PC-9 (cell line): ENCODE measurements at regions of chr1 and their contacts with region 1.

Region 1: GRCh38 chr1:178633056-178633455 is 92.0 kb upstream of the RALGPS2 start:
- DNase-seq: peak; percentile 25 to 72
- H3K4me3 ChIP-seq: no peak overlapping the region
- H3K27ac ChIP-seq: 0 out of 2 replicates have a peak overlapping the region, but pooled peaks have one; percentile 18
- H3K4me1 ChIP-seq: 0 out of 2 replicates have a peak, but pooled peaks cover 13% of the 10 kb centered on the region
- H3K27me3 ChIP-seq: no peaks in the 10 kb centered on the region
- CTCF ChIP-seq: no peak

Region 2: DNA sequence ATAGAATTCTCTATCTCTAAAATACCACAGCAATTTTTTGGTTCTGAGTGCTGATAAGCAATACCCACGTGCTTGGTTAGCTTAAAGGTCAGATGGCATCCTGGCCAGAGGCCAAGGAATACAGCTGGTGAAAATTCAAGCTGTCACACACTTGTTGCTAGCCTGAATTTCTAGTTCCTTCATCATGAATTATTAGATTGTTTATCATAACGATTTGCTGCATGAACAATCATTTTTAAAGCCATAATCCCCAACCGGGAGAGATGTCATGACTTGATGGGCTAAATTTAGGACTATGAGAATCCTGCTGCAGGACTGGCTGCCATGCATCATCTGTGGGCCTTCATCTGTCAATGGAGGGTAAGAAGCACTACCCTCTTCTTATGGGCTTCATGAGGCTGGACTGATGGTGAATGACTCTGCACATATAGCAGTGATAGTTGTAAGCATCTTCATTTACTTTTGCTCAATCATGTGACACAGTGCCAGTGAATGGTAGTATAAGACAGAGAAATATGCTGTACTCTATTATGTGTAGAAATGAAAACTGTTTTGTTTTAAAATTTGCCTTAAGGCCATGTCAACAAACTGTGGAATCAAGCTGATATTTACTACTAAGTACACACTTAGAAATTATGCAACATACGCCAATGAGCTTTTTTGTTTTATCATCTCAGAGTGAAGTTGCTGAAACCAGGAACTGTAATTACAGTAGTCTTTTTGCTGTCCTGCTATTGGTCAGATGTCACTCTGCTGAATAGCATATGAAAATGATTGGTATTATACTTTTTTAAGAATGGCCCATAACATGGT is 11.5 kb after region 1 on chr1:
- CTCF ChIA-PET with region 1: no interaction called
- POLR2A ChIA-PET with region 1: no interaction called
- intact Hi-C with region 1: no loop called
- DNase-seq: peak; percentile 29 to 80
- H3K4me3 ChIP-seq: no peak overlapping the region
- H3K27ac ChIP-seq: no peak overlapping the region
- H3K4me1 ChIP-seq: peaks cover 14% of the 10 kb centered on the region
- H3K27me3 ChIP-seq: no peaks in the 10 kb centered on the region
- CTCF ChIP-seq: no peak

Region 3: DNA sequence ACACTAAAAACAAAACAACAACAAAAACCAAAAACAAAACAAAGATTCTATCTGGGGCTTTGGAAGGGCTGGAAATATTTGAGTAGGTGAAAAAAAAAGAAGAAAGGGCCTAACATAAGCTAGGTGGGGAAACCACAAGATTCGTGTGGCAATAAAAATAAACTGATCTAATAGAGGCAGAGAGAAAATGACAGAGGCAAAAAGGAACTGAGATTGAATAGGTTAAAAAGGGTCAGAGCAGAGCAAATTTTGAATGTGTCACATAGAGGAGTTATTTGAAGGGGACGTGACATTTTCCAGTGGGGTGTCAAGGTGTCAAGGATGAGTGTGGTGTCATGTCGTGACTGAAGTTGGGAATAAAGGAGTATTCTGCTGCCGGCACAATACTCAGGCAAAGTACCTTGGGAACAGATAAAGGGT is 26.7 kb after region 1 on chr1:
- CTCF ChIA-PET with region 1: no interaction called
- POLR2A ChIA-PET with region 1: interaction called, 12 read pairs
- intact Hi-C with region 1: no loop called
- DNase-seq: no peak
- H3K4me3 ChIP-seq: no peak overlapping the region
- H3K27ac ChIP-seq: no peak overlapping the region
- H3K4me1 ChIP-seq: peaks cover 42% of the 10 kb centered on the region
- H3K27me3 ChIP-seq: no peaks in the 10 kb centered on the region
- CTCF ChIP-seq: no peak